ENCODE measurements at regions of chr1 and their contacts with region 1.

Region 1: DNA sequence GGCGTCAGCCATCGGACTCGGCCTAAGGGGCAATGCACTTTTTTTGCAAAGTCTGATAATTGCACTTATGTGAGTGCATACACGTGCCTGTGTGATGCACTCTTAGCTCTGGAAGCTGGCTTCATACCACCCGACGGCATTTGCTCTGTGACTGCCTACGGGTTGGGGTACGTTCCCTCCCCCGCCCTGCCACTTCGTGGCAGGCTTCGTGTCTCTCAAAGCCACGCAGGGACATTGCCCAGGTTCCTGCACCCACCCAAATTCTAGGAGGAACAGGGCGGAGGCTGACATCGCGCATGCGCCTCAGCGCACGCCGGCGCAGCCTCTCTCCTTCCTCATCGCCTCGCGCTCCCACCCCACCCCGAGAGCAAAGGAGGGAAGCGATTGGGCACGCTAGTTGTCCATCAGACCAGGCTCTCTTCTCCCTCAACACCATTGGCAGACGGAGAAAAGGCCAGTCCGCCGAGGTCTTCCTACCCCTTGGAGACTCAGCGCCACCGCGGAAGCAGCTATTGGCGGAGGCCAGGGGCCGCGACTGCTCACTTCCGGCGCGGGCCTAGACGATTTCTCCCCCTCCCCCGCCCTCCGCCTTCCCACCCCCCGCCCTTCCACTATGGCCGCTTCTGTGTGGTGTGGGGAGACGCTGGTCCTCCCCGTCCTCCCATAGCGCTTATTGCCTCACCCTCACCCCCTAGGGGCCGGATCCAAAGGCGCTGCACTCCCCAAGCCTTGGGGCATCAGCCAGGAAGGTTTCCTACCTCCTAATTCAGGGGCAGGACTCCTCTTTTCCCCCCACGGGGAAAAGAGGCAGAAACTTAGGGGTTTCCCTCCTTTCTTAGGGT is at the start of gene INTS3:
- DNase-seq: peak; percentile 90
- ATAC-seq: peak; percentile 96
- H3K4me3 Mint-ChIP-seq: peak within 1 kb of the TSS; percentile 97
- H3K27ac Mint-ChIP-seq: peak within 1 kb of the TSS; percentile 96
- H3K4me1 Mint-ChIP-seq: peaks cover 39% of the 10 kb centered on the region
- H3K27me3 Mint-ChIP-seq: no peaks in the 10 kb centered on the region
- CTCF ChIP-seq: no peak
- total RNA-seq, gene INTS3: 81.1 and 88.6 TPM in 2 replicates

Region 2: GRCh38 chr1:153545067-153546055 is 182.3 kb before region 1 on chr1 and contains the start of gene S100A4:
- CTCF ChIA-PET with region 1: no interaction called
- POLR2A ChIA-PET with region 1: interaction called, 10 read pairs
- intact Hi-C with region 1: no loop called
- DNase-seq: peak; percentile 56
- ATAC-seq: peak; percentile 78
- H3K4me3 Mint-ChIP-seq: peak within 1 kb of the TSS; percentile 95
- H3K27ac Mint-ChIP-seq: peak within 1 kb of the TSS; percentile 97
- H3K4me1 Mint-ChIP-seq: peaks cover 58% of the 10 kb centered on the region
- H3K27me3 Mint-ChIP-seq: peaks cover 2% of the 10 kb centered on the region
- CTCF ChIP-seq: no peak
- total RNA-seq, gene S100A4: 315 and 398 TPM in 2 replicates

Region 3: DNA sequence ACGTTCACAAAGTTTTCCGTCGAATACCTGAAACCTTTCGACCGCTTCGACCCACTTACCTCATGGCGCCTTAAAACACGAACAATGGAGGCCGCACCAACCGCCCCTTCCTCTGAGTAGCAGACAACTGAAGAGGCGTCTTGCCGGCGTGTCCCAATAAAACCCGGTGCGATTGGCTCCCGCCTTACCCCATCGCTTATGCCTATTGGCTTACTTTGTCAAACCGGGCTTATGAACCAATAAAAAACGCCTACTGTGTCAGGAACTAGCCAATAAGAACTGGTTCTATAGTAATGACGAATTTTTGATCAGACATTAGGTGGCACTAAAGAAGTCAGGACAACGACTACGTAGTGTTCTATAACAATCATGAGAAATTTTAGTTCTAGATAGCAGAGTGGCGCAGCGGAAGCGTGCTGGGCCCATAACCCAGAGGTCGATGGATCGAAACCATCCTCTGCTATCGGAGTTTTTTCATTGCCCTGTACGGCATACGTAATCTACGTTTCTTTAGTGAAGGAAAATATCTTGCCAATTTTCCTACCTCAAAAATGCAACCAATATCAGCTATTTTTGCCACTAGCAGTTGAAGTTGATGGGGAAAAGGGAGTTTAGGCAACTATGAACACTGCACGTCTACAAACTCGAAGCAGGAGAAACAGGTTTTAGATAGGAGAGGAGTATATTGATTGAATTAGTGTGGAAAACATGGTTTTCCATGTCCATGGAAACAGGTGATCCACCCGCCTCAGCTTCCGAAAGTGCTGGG is 56.6 kb before region 1 on chr1 and contains the start of gene ILF2:
- CTCF ChIA-PET with region 1: no interaction called
- POLR2A ChIA-PET with region 1: interaction called, 14 read pairs
- intact Hi-C with region 1: loop called (anchors 1 kb)
- DNase-seq: peak; percentile 85
- ATAC-seq: peak; percentile 83
- H3K4me3 Mint-ChIP-seq: no peak within 1 kb of the TSS
- H3K27ac Mint-ChIP-seq: no peak within 1 kb of the TSS
- H3K4me1 Mint-ChIP-seq: peaks cover 28% of the 10 kb centered on the region
- H3K27me3 Mint-ChIP-seq: no peaks in the 10 kb centered on the region
- CTCF ChIP-seq: no peak
- total RNA-seq, gene ILF2: 182 and 191 TPM in 2 replicates

Region 4: DNA sequence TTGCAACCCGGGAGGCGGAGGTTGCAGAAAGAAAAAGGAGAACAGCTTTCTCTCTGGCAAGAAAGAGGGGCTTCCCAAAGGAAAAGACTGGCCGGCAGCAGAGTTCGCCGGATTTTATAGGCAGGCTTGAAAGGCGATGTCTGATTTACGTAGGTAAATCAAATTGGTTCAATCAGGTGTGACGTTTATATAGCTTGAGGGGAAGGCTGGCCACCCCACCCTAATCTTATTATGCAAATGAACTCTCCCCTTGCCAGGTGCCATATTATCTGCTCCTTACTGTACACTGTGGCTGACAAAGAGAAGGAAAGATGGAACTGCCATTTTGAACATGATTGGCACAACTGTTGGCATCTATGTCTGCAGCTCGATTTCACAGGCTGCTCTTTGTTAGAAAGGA is 16.7 kb before region 1 on chr1:
- CTCF ChIA-PET with region 1: no interaction called
- POLR2A ChIA-PET with region 1: interaction called, 10 read pairs
- intact Hi-C with region 1: no loop called
- DNase-seq: no peak
- ATAC-seq: no peak
- H3K4me3 Mint-ChIP-seq: no peak overlapping the region
- H3K27ac Mint-ChIP-seq: no peak overlapping the region
- H3K4me1 Mint-ChIP-seq: no peaks in the 10 kb centered on the region
- H3K27me3 Mint-ChIP-seq: no peaks in the 10 kb centered on the region
- CTCF ChIP-seq: no peak

Region 5: DNA sequence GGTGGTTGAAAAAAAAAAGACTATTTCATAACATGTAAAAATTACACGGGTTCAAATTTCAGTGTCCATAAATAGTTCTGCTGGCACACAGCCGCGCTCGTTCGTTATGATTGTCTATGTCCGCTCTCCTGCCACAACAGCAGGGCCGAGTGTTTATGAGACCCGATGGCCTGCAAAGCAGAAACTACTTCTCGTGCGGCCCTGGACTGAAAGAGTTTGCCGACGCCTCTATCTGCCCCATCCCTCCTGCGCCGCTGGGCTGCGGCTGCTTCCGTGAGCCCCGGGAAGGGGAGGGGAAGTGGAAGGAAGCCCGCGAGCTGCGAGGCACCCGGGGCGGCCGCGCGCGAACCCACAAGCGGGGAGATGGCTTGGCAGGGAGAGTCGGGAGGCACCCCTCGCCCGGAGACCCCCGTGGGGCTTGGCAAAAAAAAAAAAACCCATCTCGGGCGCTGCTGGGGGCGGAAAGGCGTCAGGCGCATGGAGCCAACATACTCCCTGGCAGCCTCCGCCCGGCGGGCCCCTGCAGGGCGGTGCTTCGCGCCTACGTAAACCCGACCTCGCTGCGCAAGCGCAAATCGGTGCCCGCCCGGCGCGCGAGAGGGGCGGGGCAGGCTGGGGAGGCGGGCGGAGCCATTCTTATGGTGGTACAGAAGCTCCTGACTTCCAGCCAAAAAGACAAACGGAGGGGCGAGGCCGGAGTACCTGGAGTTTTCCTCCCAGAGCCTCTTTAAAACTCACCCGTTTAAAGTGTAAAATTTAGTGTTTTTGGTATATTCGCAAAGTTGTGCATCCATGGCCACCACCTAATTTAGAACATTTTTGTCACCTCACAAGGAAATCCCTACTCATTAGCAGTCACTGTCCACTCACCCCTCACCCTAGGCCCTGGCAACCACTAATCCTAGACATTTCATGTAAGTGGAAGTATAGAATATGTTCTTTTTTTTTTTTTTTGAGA is 55.8 kb after region 1 on chr1:
- CTCF ChIA-PET with region 1: no interaction called
- POLR2A ChIA-PET with region 1: interaction called, 11 read pairs
- intact Hi-C with region 1: loop called (anchors 1 kb)
- DNase-seq: peak; percentile 92
- ATAC-seq: peak; percentile 96
- H3K4me3 Mint-ChIP-seq: peak overlapping the region; percentile 93
- H3K27ac Mint-ChIP-seq: peak overlapping the region; percentile 96
- H3K4me1 Mint-ChIP-seq: peaks cover 25% of the 10 kb centered on the region
- H3K27me3 Mint-ChIP-seq: no peaks in the 10 kb centered on the region
- CTCF ChIP-seq: no peak

Region 6: DNA sequence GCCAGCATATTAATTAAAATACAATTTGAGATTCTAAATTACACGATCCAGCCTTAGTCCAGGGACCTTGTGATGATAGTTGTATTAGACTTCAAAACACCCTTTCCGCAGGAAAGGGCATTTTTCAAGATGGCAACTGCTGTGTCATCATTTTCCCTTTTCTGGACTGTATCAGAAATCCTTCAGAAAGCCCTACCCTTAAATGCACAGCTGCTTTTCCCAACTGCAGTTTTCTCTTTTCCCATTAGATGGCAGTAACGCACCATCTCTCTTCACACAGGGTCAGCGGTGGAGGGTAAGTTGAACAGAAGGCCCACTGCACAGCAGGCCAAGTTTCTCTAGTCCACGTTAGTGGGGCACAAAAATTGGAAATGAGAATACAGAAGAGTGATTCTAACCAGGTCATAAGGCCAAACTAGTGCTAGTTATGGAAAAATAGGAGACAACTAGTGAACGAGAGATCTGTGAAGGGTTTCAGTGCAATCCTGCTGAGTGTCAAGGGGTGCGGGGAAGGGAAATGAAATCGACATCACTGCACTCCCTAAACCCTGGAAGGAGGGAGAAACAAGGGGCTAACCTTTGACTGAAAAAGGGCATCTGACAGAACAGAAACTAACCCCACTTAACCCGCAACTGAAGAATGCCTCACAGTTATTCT is 752.2 kb after region 1 on chr1:
- CTCF ChIA-PET with region 1: no interaction called
- POLR2A ChIA-PET with region 1: no interaction called
- intact Hi-C with region 1: no loop called
- DNase-seq: no peak
- ATAC-seq: peak; percentile 95
- H3K4me3 Mint-ChIP-seq: no peak overlapping the region
- H3K27ac Mint-ChIP-seq: no peak overlapping the region
- H3K4me1 Mint-ChIP-seq: peaks cover 6% of the 10 kb centered on the region
- H3K27me3 Mint-ChIP-seq: no peaks in the 10 kb centered on the region
- CTCF ChIP-seq: peak; percentile 86

Measured in activated B cell treated with CpG ODN at 0.5 μM for 24 hours (primary cell).